MCF 10A (cell line): ENCODE measurements at regions of chr11 and their contacts with region 1.

Region 1: DNA sequence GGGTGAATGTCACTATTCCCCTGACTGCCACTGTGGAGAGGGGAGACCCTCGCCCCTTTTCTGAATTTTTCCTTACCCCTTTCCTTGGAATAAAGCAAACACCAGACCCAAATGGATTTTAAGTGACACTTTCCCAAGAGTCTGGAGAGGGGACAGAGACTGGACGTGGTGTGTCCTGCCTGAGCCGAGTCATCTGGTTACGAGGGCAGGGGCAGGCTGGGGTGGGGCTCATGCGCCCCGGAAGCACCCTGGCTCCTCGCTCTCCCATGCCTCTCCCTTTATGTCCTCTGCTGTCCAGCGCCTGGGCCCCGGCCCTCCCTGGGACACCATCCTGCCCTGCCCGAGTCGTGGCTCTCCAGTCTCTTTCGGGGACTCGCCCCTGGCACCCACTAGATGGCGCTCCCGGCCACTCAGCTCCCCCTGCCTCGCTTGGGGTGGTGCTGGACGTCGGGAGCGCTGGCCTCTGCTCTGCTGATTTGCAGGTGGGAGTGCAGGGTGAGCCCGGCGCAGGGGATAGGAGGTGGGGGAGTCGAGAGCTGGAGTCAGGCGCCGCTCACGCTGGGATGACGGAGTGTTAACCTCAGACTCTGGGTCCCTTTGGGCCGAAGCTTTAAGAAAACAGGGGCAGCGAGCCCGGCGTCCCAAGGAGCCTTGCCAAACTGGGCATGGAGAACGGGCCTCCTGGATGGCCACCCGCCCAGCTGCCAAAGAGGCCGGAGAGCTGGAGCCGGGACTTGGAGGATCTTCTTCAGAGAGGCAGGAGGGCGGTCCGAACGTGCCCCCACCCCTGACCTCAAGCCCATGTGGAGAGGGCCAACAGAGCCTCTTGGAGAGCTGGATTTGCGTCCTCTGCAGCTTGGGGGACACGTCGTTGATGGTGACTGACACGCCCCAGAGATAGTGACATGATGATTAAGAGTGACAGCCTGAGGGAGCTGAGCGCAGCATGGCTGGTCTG is 89.9 kb downstream of the RPS6KA4 start:
- DNase-seq: peak; percentile 81
- H3K4me3 Mint-ChIP-seq: peak overlapping the region; percentile 53
- H3K27ac Mint-ChIP-seq: no peak overlapping the region
- H3K4me1 Mint-ChIP-seq: peaks cover 7% of the 10 kb centered on the region
- H3K27me3 Mint-ChIP-seq: peaks cover 49% of the 10 kb centered on the region
- CTCF ChIP-seq: peak; percentile 83

Region 2: DNA sequence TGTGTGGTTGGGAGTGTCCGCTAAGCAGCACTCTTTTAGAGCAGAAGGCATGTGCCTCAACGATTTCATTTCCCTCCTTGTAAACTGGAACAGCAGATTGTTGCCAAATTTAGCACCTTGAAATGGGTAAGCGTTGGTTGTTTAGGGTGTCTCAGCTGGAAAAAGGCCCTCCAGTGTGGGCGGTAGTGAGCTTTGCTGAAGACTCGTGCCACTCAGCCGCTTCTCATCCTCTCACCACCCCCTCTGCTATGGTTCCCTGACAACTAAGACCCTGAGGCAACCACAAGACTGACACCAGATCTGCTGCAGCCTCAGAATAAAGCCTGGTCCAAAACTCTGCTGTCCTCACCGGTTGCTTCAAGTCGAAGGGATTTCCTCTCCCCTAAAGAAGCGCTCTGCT is 252.3 kb before region 1 on chr11:
- CTCF ChIA-PET with region 1: no interaction called
- POLR2A ChIA-PET with region 1: no interaction called
- intact Hi-C with region 1: no loop called
- DNase-seq: no peak
- H3K4me3 Mint-ChIP-seq: no peak overlapping the region
- H3K27ac Mint-ChIP-seq: no peak overlapping the region
- H3K4me1 Mint-ChIP-seq: no peaks in the 10 kb centered on the region
- H3K27me3 Mint-ChIP-seq: no peaks in the 10 kb centered on the region
- CTCF ChIP-seq: no peak

Region 3: DNA sequence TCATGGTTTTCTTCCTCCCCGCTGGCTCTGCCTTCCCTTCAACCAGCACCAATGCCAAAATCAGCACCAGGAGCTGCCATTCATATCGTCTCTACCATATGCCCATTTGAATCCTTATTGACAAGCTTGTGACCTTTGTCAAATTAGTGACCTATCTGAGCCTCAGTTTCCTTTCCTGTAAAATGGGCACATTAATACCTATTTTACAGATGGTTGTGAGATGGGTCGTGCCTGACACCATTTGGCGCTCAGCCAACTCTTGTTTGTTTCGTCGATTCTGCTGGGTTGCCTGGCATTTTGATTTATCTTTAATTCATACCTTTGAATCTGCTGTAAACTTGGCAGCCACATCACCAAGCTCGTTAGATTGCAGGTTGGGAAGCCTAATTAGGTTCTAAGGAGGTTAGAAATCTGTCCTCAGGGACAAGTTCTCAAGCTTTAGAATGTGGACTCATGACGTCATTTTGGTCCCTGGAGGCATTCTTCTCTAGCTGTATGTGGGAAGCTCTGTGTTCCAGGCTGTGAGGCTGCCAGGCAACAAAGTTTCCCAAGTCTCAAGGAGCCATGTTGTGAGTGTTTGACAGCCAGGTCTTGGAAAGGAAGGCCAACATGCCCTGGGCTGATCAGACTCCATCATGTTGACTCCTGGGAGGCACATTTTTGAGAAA is 28.9 kb before region 1 on chr11:
- CTCF ChIA-PET with region 1: interaction called, 11 read pairs
- POLR2A ChIA-PET with region 1: no interaction called
- intact Hi-C with region 1: no loop called
- DNase-seq: peak; percentile 23
- H3K4me3 Mint-ChIP-seq: no peak overlapping the region
- H3K27ac Mint-ChIP-seq: no peak overlapping the region
- H3K4me1 Mint-ChIP-seq: no peaks in the 10 kb centered on the region
- H3K27me3 Mint-ChIP-seq: peaks cover 41% of the 10 kb centered on the region
- CTCF ChIP-seq: no peak

Region 4: DNA sequence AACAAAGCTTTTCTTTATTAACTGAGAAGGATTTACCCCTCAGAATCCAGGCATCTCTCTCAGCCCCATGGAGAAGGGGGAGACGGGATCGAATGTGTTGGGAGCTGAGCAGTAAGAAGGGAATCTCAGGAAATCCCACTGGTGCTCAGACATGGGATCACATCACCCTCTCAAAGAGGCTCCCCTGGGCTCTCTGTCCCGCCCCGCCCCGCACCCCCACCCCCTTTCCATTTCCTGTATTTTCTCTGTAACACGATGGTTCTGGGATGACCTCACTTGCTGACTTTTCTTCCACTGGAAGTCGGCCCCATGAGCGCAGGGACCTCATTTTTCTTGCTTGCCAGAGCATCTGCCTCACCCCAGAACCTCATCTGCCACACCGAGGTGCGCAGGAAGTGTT is 10.1 kb after region 1 on chr11:
- CTCF ChIA-PET with region 1: interaction called, 30 read pairs
- POLR2A ChIA-PET with region 1: no interaction called
- intact Hi-C with region 1: no loop called
- DNase-seq: no peak
- H3K4me3 Mint-ChIP-seq: no peak overlapping the region
- H3K27ac Mint-ChIP-seq: no peak overlapping the region
- H3K4me1 Mint-ChIP-seq: peaks cover 2% of the 10 kb centered on the region
- H3K27me3 Mint-ChIP-seq: no peaks in the 10 kb centered on the region
- CTCF ChIP-seq: no peak

Region 5: DNA sequence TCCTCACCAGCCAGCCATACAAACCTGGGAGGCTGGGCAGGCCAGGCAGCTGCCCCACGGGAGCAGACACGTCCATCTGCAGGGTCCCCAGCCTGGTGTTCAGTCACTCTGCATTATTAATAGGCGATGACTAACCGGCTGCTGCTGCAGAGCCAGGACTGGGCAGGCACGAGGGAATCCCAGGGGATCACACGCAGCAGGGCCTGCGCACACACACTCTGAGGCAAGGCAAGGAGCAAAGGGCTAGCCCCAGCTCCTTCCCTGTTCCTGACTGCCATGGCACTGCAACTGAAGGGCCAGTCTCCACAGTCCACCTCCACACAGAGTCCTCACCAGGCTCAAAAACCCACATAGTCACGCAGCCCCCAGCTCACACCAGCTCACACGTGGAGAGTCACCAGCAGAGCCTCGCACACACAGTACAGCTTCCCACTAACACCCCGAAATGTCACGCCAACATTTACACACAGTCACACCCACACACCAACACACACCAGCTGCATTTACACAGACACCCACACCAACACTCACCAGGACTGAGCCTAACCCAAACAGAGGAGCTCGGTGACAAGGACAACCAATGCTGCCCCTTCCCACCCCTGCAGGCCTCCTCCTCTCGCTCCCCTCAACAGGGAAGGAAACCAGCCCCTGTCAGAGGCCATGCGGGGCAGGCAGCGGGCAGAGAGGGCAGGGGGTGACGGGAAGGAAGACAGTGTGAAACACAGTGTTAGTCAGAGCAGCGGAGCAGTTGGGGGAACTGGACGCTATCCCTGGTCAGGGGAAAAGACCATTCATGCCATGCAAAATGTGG is 226.8 kb after region 1 on chr11:
- CTCF ChIA-PET with region 1: interaction called, 18 read pairs
- POLR2A ChIA-PET with region 1: interaction called, 3 read pairs
- intact Hi-C with region 1: no loop called
- DNase-seq: peak; percentile 61
- H3K4me3 Mint-ChIP-seq: no peak overlapping the region
- H3K27ac Mint-ChIP-seq: no peak overlapping the region
- H3K4me1 Mint-ChIP-seq: peaks cover 6% of the 10 kb centered on the region
- H3K27me3 Mint-ChIP-seq: peaks cover 89% of the 10 kb centered on the region
- CTCF ChIP-seq: no peak